Mucosa of descending colon (tissue), 3 donors: ENCODE measurements at regions of chr17 and their contacts with region 1.

Region 1: DNA sequence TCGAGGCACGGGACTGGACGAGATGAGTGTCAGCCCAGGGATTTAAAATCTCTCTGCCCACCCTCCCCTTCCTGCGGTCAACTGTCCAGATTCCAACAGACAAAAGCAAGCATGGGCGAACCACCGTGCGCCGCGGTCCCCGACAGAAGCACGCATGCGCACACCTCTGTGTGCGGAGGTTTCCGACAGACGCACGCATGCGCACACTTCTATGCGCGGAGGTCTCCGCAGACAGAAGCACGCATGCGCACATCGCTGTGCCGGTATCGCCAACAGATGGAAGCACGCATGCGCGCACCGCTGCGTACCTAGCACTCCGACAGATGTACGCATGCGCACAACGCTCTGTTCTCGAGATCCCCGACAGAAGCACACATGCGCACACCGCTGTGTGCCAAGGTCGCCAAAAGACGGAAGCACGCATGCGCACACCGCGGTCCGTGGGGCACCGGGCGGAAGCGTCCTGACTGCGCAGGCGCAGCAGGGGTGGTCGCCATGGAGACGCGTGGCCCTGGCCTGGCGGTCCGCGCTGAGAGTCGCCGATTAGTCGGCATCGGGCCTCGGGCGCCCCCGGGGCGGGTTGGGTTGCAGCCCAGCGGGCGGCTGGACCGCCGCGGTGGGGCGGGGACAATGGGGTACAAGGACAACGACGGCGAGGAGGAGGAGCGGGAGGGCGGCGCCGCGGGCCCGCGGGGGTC is 57.4 kb upstream of the RPH3AL start:
- DNase-seq: peak; percentile 100
- ATAC-seq: peak; percentile 93
- H3K4me3 ChIP-seq: peak overlapping the region; percentile 92
- H3K4me1 ChIP-seq: peaks cover 20% of the 10 kb centered on the region
- CTCF ChIP-seq: peak; percentile 12

Region 2: GRCh38 chr17:699345-699744 is 289.3 kb after region 1 on chr17:
- intact Hi-C with region 1: loop called in 1 of 2 experiments (anchors 5 kb)
- DNase-seq: peak in 1 of 3 donors; percentile 19
- ATAC-seq: no peak
- H3K4me3 ChIP-seq: no peak overlapping the region
- H3K4me1 ChIP-seq: no peaks in the 10 kb centered on the region
- CTCF ChIP-seq: no peak

Region 3: DNA sequence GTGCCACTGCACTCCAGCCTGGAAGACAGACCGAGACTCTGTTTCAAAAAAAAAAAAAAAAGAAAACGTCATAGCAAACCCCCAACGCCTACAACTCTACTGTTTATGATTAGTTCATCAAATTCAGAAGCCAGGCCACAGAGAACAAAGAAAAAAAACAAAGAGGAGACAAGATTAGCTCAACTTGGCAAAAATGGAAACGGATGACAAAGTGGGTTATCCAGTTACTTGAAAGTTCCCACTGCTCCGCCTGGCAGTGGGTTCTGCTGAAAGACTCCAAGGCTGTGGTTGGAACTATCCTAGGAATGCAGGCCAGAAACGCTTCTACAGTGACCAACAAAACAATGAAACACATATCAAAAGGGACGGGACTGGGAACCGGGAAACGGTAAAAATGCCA is 425.3 kb after region 1 on chr17:
- intact Hi-C with region 1: no loop called
- DNase-seq: no peak
- ATAC-seq: peak; percentile 46
- H3K4me3 ChIP-seq: no peak overlapping the region
- H3K4me1 ChIP-seq: no peaks in the 10 kb centered on the region
- CTCF ChIP-seq: no peak